H1 (cell line): ENCODE measurements at regions of chr6 and their contacts with region 1.

Region 1: GRCh38 chr6:27893059-27893835 is 18.9 kb downstream of the OR2B2 start:
- DNase-seq: peak; percentile 88 to 96
- H3K4me3 ChIP-seq: peak overlapping the region; percentile 94 to 99 (median 97)
- H3K27ac ChIP-seq: peak overlapping the region; percentile 95
- H3K4me1 ChIP-seq: peaks cover 3 to 9% (median 3%) of the 10 kb centered on the region in 4 experiments; a peak in 5 of 7 replicates
- H3K27me3 ChIP-seq: no peaks in the 10 kb centered on the region
- CTCF ChIP-seq: no peak
- EP300 ChIP-seq: no peak
- POLR2A ChIP-seq: peak; percentile 99 to 100
- RAD21 ChIP-seq: no peak

Region 2: GRCh38 chr6:26025894-26026832 is 1867.1 kb before region 1 on chr6:
- CTCF ChIA-PET with region 1: no interaction called
- POLR2A ChIA-PET with region 1: interaction called, 56 read pairs
- DNase-seq: peak; percentile 90 to 93
- H3K4me3 ChIP-seq: peak overlapping the region; percentile 75 to 89 (median 82)
- H3K27ac ChIP-seq: peak overlapping the region; percentile 80
- H3K4me1 ChIP-seq: peaks cover 3 to 26% (median 10%) of the 10 kb centered on the region in 4 experiments; a peak in 5 of 7 replicates
- H3K27me3 ChIP-seq: no peaks in the 10 kb centered on the region
- CTCF ChIP-seq: peak; percentile 63 to 93 (median 77)
- EP300 ChIP-seq: peak in 1 of 2 experiments; percentile 43; a peak in 1 of 3 replicates
- POLR2A ChIP-seq: peak; percentile 85 to 91; a peak in 2 of 3 replicates
- RAD21 ChIP-seq: peak; percentile 45 to 47

Region 3: GRCh38 chr6:26216356-26216885 is 1676.8 kb before region 1 on chr6:
- CTCF ChIA-PET with region 1: no interaction called
- POLR2A ChIA-PET with region 1: interaction called, 31 read pairs
- DNase-seq: no peak
- H3K4me3 ChIP-seq: peak overlapping the region; percentile 87 to 98 (median 90)
- H3K27ac ChIP-seq: peak overlapping the region; percentile 97
- H3K4me1 ChIP-seq: peaks cover 0 to 8% (median 1%) of the 10 kb centered on the region in 4 experiments; a peak in 4 of 7 replicates
- H3K27me3 ChIP-seq: no peaks in the 10 kb centered on the region
- CTCF ChIP-seq: no peak
- EP300 ChIP-seq: no peak
- POLR2A ChIP-seq: peak; percentile 96 to 98
- RAD21 ChIP-seq: no peak

Region 4: GRCh38 chr6:26285143-26286134 is 1607.8 kb before region 1 on chr6:
- CTCF ChIA-PET with region 1: no interaction called
- POLR2A ChIA-PET with region 1: interaction called, 18 read pairs
- DNase-seq: peak; percentile 94 to 100
- H3K4me3 ChIP-seq: peak overlapping the region; percentile 74 to 95 (median 80)
- H3K27ac ChIP-seq: peak overlapping the region; percentile 96
- H3K4me1 ChIP-seq: peaks cover 0 to 7% (median 2%) of the 10 kb centered on the region in 4 experiments; a peak in 1 of 7 replicates
- H3K27me3 ChIP-seq: no peaks in the 10 kb centered on the region
- CTCF ChIP-seq: no peak
- EP300 ChIP-seq: peak in 1 of 2 experiments; percentile 97; a peak in 2 of 3 replicates
- POLR2A ChIP-seq: peak; percentile 100
- RAD21 ChIP-seq: no peak

Region 5: GRCh38 chr6:27177485-27178406 is 715.5 kb before region 1 on chr6:
- CTCF ChIA-PET with region 1: no interaction called
- POLR2A ChIA-PET with region 1: interaction called, 11 read pairs
- DNase-seq: peak in 1 of 2 experiments; percentile 84
- H3K4me3 ChIP-seq: peak overlapping the region; percentile 96 to 100 (median 100)
- H3K27ac ChIP-seq: peak overlapping the region; percentile 89
- H3K4me1 ChIP-seq: peaks cover 0 to 6% (median 1%) of the 10 kb centered on the region in 4 experiments; a peak in 3 of 7 replicates
- H3K27me3 ChIP-seq: no peaks in the 10 kb centered on the region
- CTCF ChIP-seq: peak; percentile 38 to 63 (median 47)
- EP300 ChIP-seq: no peak
- POLR2A ChIP-seq: peak; percentile 64 to 70
- RAD21 ChIP-seq: peak; percentile 48 to 63

Region 6: DNA sequence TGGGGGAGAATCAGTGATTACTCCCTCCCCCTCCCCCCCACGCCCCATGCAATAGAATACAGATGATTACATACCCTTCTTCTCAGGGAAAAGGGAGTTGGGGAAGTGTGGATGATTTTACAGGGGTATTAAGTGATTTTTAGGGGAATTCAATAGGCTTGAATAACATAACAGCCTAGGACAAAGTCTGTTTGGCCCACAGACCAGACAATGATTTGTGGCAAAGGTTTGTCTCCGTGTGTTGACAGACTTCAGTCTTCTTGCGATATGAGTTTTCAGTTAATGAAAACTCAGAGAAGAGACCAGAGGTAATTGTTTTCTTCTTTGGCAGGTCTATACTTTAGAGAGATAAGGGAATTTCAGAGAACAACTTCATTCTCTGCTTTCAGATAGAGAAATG is 76.3 kb before region 1 on chr6:
- CTCF ChIA-PET with region 1: interaction called, 6 read pairs
- POLR2A ChIA-PET with region 1: interaction called, 924 read pairs
- DNase-seq: peak in 1 of 2 experiments; percentile 39
- H3K4me3 ChIP-seq: no peak overlapping the region
- H3K27ac ChIP-seq: no peak overlapping the region
- H3K4me1 ChIP-seq: peaks cover 0 to 4% (median 1%) of the 10 kb centered on the region in 4 experiments; a peak in 3 of 7 replicates
- H3K27me3 ChIP-seq: no peaks in the 10 kb centered on the region
- CTCF ChIP-seq: no peak
- EP300 ChIP-seq: no peak
- POLR2A ChIP-seq: no peak
- RAD21 ChIP-seq: no peak

Region 7: GRCh38 chr6:27864906-27865849 is 28.1 kb before region 1 on chr6:
- CTCF ChIA-PET with region 1: interaction called, 19 read pairs
- POLR2A ChIA-PET with region 1: interaction called, 3,039 read pairs
- DNase-seq: peak in 1 of 2 experiments; percentile 86
- H3K4me3 ChIP-seq: peak overlapping the region; percentile 61 to 86 (median 79)
- H3K27ac ChIP-seq: peak overlapping the region; percentile 90
- H3K4me1 ChIP-seq: peaks cover 0 to 5% (median 1%) of the 10 kb centered on the region in 4 experiments; a peak in 2 of 7 replicates
- H3K27me3 ChIP-seq: no peaks in the 10 kb centered on the region
- CTCF ChIP-seq: no peak
- EP300 ChIP-seq: no peak
- POLR2A ChIP-seq: peak; percentile 93 to 97
- RAD21 ChIP-seq: no peak; a peak in 1 of 4 replicates